ENCODE measurements at regions of chr1 and their contacts with region 1.

Region 1: GRCh38 chr1:23224714-23225648 is 7.7 kb upstream of the HTR1D start:
- DNase-seq: peak; percentile 84
- H3K4me3 ChIP-seq: no peak overlapping the region
- H3K27ac ChIP-seq: no peak overlapping the region
- H3K4me1 ChIP-seq: peaks cover 7% of the 10 kb centered on the region
- H3K27me3 ChIP-seq: no peaks in the 10 kb centered on the region
- CTCF ChIP-seq: no peak

Region 2: GRCh38 chr1:23242414-23242813 is 17.4 kb after region 1 on chr1:
- CTCF ChIA-PET with region 1: interaction called, 13 read pairs
- dilution Hi-C with region 1: no loop called
- in situ Hi-C with region 1: no loop called
- intact Hi-C with region 1: no loop called
- DNase-seq: no peak
- H3K4me3 ChIP-seq: no peak overlapping the region
- H3K27ac ChIP-seq: no peak overlapping the region
- H3K4me1 ChIP-seq: peaks cover 10% of the 10 kb centered on the region
- H3K27me3 ChIP-seq: no peaks in the 10 kb centered on the region
- CTCF ChIP-seq: no peak

Region 3: GRCh38 chr1:23273450-23274133 is 48.6 kb after region 1 on chr1:
- CTCF ChIA-PET with region 1: no interaction called
- dilution Hi-C with region 1: no loop called
- in situ Hi-C with region 1: no loop called
- intact Hi-C with region 1: loop called (anchors 5 kb)
- DNase-seq: peak; percentile 36
- H3K4me3 ChIP-seq: no peak overlapping the region
- H3K27ac ChIP-seq: no peak overlapping the region
- H3K4me1 ChIP-seq: peaks cover 4% of the 10 kb centered on the region
- H3K27me3 ChIP-seq: no peaks in the 10 kb centered on the region
- CTCF ChIP-seq: no peak

Measured in mammary epithelial cell (primary cell).